Cardiac septum (tissue), 1 donor: ENCODE measurements at regions of chr7 and their contacts with region 1.

Region 1: DNA sequence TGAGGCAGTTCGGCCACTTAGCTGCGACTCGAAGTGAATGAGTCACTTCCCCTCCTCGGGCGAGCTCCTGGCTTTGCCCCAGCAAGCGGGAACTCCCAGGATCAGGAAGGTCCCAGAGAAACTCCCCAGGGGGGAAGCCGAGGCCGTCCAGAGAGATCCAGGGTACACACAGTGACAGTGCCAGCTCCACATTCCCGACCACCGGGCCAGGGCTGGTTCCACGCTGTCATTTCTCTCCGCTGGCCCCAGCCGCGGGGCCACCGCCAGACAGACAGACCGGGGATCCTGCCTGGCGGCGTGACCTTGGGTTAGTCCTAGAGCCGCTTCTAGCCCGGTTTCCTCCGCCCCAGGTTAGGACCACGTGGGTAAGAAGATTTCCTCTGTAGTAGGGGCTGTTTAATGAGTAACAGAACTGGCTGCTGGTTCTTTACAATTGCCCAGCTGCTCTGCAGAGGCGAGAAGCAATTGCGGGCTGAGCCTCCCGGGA is 463 bp upstream of the UPP1 start:
- DNase-seq: peak; percentile 96

Region 2: GRCh38 chr7:47792521-47793121 is 296.0 kb before region 1 on chr7:
- intact Hi-C with region 1: no loop called
- DNase-seq: no peak

Region 3: GRCh38 chr7:48035301-48035966 is 53.2 kb before region 1 on chr7 and contains the start of gene C7orf57:
- intact Hi-C with region 1: loop called (anchors 5 kb)
- DNase-seq: peak; percentile 96
- total RNA-seq, gene C7orf57: not detected

Region 4: GRCh38 chr7:48312151-48312550 is 223.5 kb after region 1 on chr7:
- intact Hi-C with region 1: no loop called
- DNase-seq: no peak